Heart left ventricle (tissue), 16 donors: ENCODE measurements at regions of chr9 and their contacts with region 1.

Region 1: DNA sequence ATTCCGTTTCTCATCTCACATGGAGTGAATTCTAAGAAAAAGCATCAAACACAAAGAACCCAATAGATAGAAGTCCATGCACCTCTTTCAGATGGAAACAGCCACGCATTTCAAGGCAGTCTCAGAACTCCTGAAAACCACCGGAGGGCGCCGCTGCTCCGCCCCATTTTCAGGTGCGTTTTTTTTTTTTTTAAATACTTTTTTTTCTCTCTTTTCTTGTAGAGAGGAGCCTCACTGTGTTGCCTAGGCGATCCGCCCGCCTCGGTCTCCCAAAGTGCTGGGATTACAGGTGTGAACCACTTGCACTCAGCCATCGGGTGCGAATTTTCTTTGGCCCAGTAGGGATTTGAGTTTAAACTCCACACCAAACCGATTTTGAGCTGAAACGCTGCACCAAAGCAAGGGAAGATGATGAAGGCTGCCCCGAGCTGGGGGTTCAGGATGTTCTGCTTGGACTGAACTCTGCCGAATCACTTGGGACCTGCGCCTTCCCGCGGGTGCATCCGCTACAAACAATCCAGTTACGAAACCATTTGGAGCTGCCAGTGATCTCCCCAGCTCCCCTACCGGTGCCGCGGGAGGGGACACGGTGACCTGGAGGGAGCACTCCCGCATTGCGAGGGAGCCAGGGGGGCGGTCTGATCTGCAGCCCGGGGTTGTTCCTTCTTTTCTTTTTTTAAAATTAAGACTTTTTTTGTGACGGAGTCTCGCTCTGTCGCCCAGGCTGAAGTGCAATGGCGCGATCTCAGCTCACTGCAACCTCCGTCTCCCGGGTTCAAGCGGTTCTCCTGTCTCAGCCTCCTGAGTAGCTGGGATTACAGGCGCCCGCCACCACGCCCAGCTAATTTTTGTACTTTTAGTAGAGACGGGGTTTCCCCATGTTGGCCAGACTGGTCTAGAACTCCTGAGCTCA is 1.4 kb downstream of the PTGR1 start:
- DNase-seq: peak; percentile 52 to 79 (median 66)
- ATAC-seq: peak; percentile 48 to 66 (median 56)
- H3K4me3 ChIP-seq: peak overlapping the region; percentile 68 to 92 (median 76)
- H3K27ac ChIP-seq: peak overlapping the region in 11 of 12 donors; percentile 74 to 93 (median 88)
- H3K4me1 ChIP-seq: peaks cover 0 to 29% (median 2%) of the 10 kb centered on the region in 12 donors
- H3K27me3 ChIP-seq: no peaks in the 10 kb centered on the region
- CTCF ChIP-seq: peak; percentile 40 to 73 (median 62)
- POLR2A ChIP-seq: no peak

Region 2: DNA sequence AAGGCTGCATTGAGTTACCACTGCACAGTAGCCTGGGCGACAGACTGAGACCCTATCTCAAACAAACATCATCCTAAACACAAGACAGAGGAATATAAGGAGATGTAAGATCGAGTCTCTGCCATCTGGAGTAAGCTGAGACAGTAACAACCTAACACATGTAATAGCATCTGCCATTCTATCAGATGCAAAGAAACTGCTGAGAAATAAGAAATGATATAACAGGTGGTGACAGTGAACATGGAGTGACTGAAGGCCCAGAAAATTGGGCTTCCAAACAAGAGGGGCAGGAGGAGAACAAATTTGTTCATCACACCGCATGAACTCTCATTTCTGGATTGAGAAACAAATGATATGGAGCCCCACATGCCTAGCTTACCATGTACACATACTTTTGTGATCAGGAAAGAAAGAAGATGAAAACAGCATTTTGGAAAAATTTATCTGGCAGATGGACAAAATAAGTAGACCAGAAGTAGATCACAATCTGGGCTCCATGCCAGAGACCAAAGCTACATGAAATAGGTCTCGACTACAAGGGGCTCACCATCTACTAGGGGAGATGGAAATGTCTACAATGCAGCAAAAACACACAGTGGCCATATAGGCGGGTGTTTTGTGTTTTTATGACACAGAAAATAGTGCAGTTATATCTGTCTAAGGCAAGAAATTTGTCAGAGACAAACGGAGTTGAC is 159.4 kb before region 1 on chr9:
- intact Hi-C with region 1: loop called in 1 of 10 experiments (anchors 10 kb)
- DNase-seq: no peak
- ATAC-seq: no peak
- H3K4me3 ChIP-seq: no peak overlapping the region
- H3K27ac ChIP-seq: no peak overlapping the region
- H3K4me1 ChIP-seq: no peaks in the 10 kb centered on the region
- H3K27me3 ChIP-seq: no peaks in the 10 kb centered on the region
- CTCF ChIP-seq: no peak
- POLR2A ChIP-seq: no peak

Region 3: DNA sequence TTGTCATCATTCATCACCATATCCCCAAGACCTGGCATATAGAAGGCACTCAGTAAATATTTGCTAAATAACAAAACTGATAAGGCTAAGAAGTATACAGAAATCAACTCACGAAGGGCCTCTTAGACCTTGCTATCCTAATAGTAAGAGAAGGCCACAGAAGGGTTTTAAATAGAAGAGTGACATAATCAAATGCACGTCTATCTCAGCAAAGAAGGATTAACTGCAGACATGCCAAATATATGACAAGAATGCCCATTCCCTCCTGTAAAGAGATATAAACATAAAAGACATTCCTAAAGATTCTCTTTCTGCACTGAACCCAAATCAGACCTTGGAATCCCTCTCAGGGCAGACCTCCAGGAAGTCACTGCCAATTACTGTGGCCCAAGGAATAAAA is 147.9 kb before region 1 on chr9:
- intact Hi-C with region 1: no loop called
- DNase-seq: no peak
- ATAC-seq: peak; percentile 64 to 80 (median 76)
- H3K4me3 ChIP-seq: no peak overlapping the region
- H3K27ac ChIP-seq: peak overlapping the region in 9 of 12 donors; percentile 12 to 61 (median 30)
- H3K4me1 ChIP-seq: peaks cover 0 to 47% (median 12%) of the 10 kb centered on the region in 12 donors
- H3K27me3 ChIP-seq: no peaks in the 10 kb centered on the region
- CTCF ChIP-seq: no peak
- POLR2A ChIP-seq: no peak

Region 4: GRCh38 chr9:111483862-111484571 is 114.1 kb before region 1 on chr9 and contains the start of gene ECPAS:
- intact Hi-C with region 1: loop called in 1 of 10 experiments (anchors 5 kb)
- DNase-seq: peak; percentile 68 to 86 (median 82)
- ATAC-seq: peak; percentile 76 to 87 (median 85)
- H3K4me3 ChIP-seq: peak within 1 kb of the TSS; percentile 69 to 98 (median 94)
- H3K27ac ChIP-seq: peak within 1 kb of the TSS; percentile 92 to 99 (median 98)
- H3K4me1 ChIP-seq: peaks cover 0 to 30% (median 18%) of the 10 kb centered on the region in 12 donors
- H3K27me3 ChIP-seq: no peaks in the 10 kb centered on the region
- CTCF ChIP-seq: peak in 2 of 12 donors; percentile 11 to 12
- POLR2A ChIP-seq: peak in 1 of 2 donors; percentile 13
- total RNA-seq, gene ECPAS: 73.2 to 116 (median 103) TPM

Region 5: DNA sequence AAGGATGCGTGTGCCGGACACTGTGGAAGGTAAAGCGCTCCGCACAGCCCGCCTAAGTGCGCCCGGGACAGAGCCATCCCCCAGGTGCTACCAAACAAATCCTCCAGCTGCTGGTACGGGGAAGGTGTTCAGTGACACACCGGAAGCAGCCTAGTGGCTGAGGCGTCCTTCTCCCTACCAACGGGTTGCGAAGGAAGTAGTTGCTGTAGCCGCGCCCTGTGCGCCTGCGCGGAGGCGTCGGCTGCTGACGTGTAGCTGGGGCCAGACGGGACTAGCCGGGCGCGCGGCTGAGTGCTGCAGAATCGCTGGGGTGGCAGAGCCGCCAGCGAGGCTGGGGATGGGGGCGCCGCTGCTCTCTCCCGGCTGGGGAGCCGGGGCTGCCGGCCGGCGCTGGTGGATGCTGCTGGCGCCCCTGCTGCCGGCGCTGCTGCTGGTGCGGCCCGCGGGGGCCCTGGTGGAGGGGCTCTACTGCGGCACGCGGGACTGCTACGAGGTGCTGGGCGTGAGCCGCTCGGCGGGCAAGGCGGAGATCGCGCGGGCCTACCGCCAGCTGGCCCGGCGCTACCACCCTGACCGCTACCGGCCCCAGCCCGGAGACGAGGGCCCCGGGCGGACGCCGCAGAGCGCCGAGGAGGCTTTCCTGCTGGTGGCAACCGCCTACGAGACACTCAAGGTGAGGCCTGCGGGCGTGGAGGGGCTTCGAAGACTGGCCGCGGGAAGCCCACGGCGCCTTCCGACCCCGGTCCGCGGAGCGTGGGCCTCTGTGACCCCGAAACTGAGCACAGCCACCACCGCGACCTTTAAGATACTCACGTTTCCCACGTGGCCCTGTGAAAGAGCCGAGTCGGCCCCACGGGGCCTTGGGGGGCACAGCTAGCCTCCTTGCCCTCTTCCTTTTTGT is 33.2 kb after region 1 on chr9 and contains the start of gene DNAJC25:
- intact Hi-C with region 1: loop called in 3 of 10 experiments (anchors 2 to 5 kb)
- DNase-seq: peak; percentile 96 to 98 (median 98)
- ATAC-seq: peak; percentile 99 to 100 (median 100)
- H3K4me3 ChIP-seq: peak within 1 kb of the TSS; percentile 84 to 99 (median 93)
- H3K27ac ChIP-seq: peak within 1 kb of the TSS; percentile 41 to 94 (median 87)
- H3K4me1 ChIP-seq: peaks cover 3 to 51% (median 25%) of the 10 kb centered on the region in 12 donors
- H3K27me3 ChIP-seq: no peaks in the 10 kb centered on the region
- CTCF ChIP-seq: peak in 2 of 12 donors; percentile 8 to 11
- POLR2A ChIP-seq: peak; percentile 99 to 100
- total RNA-seq, gene DNAJC25: 3.9 to 7.3 (median 5.0) TPM

Region 6: DNA sequence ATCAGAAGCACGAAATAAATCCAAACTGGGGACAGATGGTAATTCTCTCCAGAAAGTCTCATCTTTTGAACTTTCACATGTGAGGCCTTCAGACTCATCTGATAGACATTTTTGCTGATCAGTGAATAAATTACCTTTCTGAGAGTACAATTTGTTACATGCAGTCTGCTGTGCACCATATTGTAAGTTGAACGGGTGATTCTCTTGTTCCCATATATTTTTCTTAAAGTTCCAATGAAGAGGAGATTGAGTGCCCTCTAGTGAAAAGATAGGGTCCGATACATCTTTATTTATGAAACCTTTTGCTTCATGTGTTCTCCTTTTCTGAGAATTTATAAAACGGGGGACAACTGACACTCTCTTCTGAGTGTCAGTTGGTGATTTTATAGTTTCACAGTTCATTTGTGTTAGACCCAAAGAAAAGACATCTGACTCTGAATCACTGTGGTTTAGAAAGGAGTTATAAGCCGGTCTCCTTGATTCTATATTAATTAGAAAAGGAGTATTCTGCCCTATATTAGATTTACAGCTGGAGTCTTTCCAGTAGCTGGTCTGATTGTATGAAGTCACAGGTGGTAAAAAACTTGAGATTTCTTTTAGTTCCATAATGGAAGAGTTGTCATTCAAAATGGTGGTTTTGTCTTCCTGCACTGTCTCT is 93.7 kb after region 1 on chr9:
- intact Hi-C with region 1: loop called in 2 of 10 experiments (anchors 5 to 10 kb)
- DNase-seq: no peak
- ATAC-seq: no peak
- H3K4me3 ChIP-seq: no peak overlapping the region
- H3K27ac ChIP-seq: no peak overlapping the region
- H3K4me1 ChIP-seq: peaks cover 0 to 4% (median 0%) of the 10 kb centered on the region in 12 donors
- H3K27me3 ChIP-seq: no peaks in the 10 kb centered on the region
- CTCF ChIP-seq: peak in 7 of 12 donors; percentile 14 to 50 (median 32)
- POLR2A ChIP-seq: no peak

Region 7: DNA sequence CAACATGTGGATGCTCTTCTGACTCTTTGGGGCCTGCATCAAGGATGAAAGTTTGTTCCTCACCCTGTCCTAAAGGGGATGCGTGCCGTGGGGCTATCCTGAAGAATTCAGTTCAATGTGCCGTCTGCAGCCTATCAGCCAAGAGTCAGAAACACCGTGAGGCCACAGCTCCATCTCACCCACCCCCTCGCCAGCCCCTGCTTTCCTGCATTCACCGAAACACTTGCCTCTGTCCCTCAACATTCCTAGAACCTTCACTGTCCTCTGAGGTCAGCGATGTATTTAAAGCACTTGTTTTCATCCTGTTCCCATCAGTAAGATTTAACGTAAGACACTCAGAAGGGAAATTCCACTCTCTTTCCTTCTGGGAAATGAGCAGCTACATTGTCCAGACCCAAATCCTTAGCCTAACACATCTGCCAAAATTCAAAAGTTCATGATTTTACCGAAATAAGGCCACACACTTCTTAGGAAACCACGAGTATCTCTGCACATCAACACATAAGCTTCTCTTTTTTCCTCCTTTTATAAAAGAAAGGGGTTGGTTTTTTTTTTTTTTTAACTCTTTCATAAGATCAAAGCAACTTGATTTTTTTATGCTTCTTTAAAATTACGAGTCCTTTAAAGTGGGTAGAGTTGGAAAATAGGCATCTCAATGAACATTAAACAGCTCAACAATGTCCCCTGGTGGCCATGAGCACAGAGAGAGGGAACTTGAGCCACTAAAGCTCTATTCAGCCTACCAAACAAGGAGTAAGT is 476.4 kb after region 1 on chr9:
- intact Hi-C with region 1: loop called in 3 of 10 experiments (anchors 10 kb)
- DNase-seq: peak in 4 of 5 donors; percentile 57 to 68 (median 62)
- ATAC-seq: peak; percentile 78 to 90 (median 83)
- H3K4me3 ChIP-seq: peak overlapping the region in 4 of 12 donors; percentile 9 to 29 (median 15)
- H3K27ac ChIP-seq: peak overlapping the region in 11 of 12 donors; percentile 3 to 96 (median 72)
- H3K4me1 ChIP-seq: peaks cover 0 to 85% (median 13%) of the 10 kb centered on the region in 12 donors
- H3K27me3 ChIP-seq: no peaks in the 10 kb centered on the region
- CTCF ChIP-seq: peak; percentile 81 to 98 (median 91)
- POLR2A ChIP-seq: no peak

Region 8: DNA sequence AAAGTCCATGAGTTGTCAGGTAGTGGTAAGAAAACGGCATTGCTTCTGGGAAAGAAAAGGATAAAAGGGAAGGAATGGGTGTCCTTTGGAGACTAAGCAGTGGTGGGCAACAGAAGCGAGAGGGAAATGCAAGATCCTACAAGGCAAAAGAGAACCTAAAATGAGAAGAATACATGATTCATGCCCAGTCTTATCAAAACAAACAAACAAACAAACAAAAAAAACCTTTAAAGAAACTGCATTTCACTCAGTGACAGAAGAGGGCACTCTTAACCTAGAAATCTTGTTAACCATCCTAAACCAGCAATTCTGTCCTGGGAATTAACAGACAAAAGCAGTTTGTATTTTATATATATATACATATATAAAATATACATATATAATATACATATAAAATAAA is 488.6 kb after region 1 on chr9:
- intact Hi-C with region 1: loop called in 1 of 10 experiments (anchors 2 kb)
- DNase-seq: no peak
- ATAC-seq: no peak
- H3K4me3 ChIP-seq: no peak overlapping the region
- H3K27ac ChIP-seq: no peak overlapping the region
- H3K4me1 ChIP-seq: peaks cover 0 to 1% (median 0%) of the 10 kb centered on the region in 12 donors
- H3K27me3 ChIP-seq: no peaks in the 10 kb centered on the region
- CTCF ChIP-seq: peak in 11 of 12 donors; percentile 37 to 70 (median 64)
- POLR2A ChIP-seq: no peak